Heart left ventricle (tissue), 16 donors: ENCODE measurements at regions of chr20 and their contacts with region 1.

Region 1: GRCh38 chr20:48682529-48683251 is 145.1 kb downstream of the PREX1 start:
- DNase-seq: peak; percentile 88 to 94 (median 90)
- ATAC-seq: peak; percentile 90 to 93 (median 92)
- H3K4me3 ChIP-seq: peak overlapping the region in 8 of 12 donors; percentile 1 to 28 (median 14)
- H3K27ac ChIP-seq: peak overlapping the region; percentile 50 to 79 (median 70)
- H3K4me1 ChIP-seq: peaks cover 19 to 62% (median 57%) of the 10 kb centered on the region in 12 donors
- H3K27me3 ChIP-seq: no peaks in the 10 kb centered on the region
- CTCF ChIP-seq: no peak
- POLR2A ChIP-seq: no peak

Region 2: DNA sequence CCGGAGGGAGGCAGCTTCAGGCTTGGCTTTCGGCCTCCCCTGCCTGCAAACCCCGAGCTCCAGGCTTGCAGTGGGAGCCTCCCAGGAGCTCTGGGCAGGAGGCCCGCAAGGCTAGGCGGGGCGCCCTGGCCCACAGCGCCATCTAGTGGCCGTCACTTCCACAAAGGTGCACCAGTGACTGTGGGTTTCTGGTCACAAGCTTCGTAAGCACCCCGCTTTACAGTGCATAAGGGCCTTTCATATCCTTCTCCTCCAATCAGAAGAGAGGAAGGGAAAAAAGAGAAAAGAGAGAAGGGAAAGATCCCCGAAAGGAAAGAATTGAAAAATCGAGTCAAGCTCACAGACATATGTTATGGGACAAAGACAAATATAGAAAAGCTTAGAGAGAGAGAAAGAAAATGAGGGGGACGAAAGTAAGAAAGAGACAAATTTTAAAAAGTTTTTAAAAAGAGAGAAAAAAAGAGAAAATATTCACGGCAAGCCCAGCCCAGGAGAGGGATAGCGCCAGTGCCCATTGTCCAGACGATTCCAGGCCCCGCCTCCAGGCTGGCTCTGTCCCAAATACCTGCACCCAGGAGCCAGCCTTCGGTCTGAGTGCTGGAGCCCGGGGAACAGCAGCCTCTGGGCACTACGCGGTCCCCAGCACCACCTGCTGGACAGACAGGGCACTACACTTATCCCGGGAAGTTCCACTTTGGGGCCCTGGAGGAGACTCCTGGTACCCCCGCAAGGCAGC is 62.0 kb before region 1 on chr20:
- intact Hi-C with region 1: no loop called
- DNase-seq: peak; percentile 84 to 91 (median 86)
- ATAC-seq: peak; percentile 88 to 95 (median 94)
- H3K4me3 ChIP-seq: peak overlapping the region in 9 of 12 donors; percentile 1 to 55 (median 37)
- H3K27ac ChIP-seq: no peak overlapping the region
- H3K4me1 ChIP-seq: peaks cover 0 to 27% (median 15%) of the 10 kb centered on the region in 12 donors
- H3K27me3 ChIP-seq: no peaks in the 10 kb centered on the region
- CTCF ChIP-seq: peak in 11 of 12 donors; percentile 74 to 90 (median 81)
- POLR2A ChIP-seq: no peak

Region 3: GRCh38 chr20:48750947-48751635 is 68.4 kb after region 1 on chr20:
- intact Hi-C with region 1: loop called in 1 of 10 experiments (anchors 5 kb)
- DNase-seq: peak; percentile 75 to 88 (median 78)
- ATAC-seq: peak; percentile 79 to 95 (median 89)
- H3K4me3 ChIP-seq: peak overlapping the region in 1 of 12 donors; percentile 5
- H3K27ac ChIP-seq: peak overlapping the region; percentile 40 to 85 (median 68)
- H3K4me1 ChIP-seq: peaks cover 0 to 85% (median 10%) of the 10 kb centered on the region in 12 donors
- H3K27me3 ChIP-seq: no peaks in the 10 kb centered on the region
- CTCF ChIP-seq: peak in 1 of 12 donors; percentile 6
- POLR2A ChIP-seq: no peak

Region 4: DNA sequence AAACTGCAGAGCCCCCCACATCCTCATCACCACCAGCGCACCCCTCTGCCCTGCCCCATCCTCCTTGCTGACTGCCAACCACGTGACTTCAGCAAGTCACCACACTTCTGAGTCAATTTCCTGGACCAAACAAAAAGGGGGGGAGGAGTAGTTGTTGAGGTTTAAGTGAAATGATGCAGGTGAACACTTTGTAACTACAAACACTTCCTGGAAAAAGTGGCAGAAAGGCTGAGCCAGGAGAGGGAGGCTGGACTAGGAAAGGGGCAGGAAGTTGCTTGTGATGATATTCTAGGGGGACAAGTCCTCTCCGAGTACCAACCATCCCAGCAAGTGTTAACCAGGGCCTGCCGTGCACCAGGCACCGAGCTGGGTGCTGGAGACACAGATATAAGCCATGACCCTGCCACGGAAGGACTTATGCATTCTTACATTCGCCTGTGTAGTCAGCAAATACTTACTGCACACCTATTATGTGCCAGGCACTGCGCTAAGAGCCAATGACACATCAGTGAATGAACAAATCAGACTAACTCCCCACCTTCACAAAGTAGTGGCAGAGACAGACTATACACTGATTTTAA is 77.8 kb after region 1 on chr20:
- intact Hi-C with region 1: loop called in 1 of 10 experiments (anchors 5 kb)
- DNase-seq: peak in 3 of 5 donors; percentile 32 to 66 (median 41)
- ATAC-seq: peak; percentile 23 to 68 (median 57)
- H3K4me3 ChIP-seq: peak overlapping the region in 1 of 12 donors; percentile 23
- H3K27ac ChIP-seq: peak overlapping the region; percentile 26 to 87 (median 62)
- H3K4me1 ChIP-seq: peaks cover 0 to 92% (median 23%) of the 10 kb centered on the region in 12 donors
- H3K27me3 ChIP-seq: no peaks in the 10 kb centered on the region
- CTCF ChIP-seq: no peak
- POLR2A ChIP-seq: no peak

Region 5: DNA sequence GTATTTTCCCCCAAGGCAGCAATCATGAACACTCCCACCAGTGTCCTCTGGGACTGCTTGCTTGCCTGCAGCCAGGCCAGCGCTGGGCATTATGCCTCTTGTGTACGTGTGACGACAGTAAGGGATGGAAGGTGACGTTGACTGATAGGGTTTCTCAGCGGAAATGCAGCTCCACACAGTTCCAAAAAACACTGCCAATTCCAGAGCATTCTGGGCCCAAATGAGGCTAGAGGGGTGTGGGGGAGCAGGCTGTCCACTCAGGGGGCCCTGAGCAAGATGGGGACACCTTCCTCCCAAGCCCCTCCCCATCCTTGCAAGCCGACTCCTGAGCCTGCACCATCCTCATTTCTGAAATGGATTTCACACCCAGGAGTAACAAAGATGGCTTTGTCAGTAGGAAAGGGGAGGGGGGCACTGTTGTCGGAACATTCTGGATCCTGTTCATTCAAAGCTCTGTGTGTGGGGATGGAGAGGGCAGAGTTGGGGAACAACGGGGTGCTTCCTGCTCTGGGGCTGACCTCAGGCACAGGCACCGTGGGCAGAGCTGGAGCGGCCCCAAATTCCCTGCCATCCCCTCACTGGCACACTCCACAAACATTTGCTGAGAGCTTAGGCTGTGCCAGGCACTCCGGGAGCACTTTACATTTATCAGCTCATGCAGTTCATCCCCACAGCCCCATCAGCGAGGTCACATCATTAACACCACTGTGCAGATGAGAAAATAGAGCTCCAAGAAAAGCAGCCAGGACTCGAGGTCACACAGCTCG is 125.2 kb after region 1 on chr20:
- intact Hi-C with region 1: loop called in 1 of 10 experiments (anchors 5 kb)
- DNase-seq: peak in 3 of 5 donors; percentile 53 to 82 (median 79)
- ATAC-seq: peak; percentile 79 to 90 (median 87)
- H3K4me3 ChIP-seq: peak overlapping the region in 3 of 12 donors; percentile 8 to 21 (median 10)
- H3K27ac ChIP-seq: peak overlapping the region in 8 of 12 donors; percentile 17 to 67 (median 50)
- H3K4me1 ChIP-seq: peaks cover 0 to 68% (median 12%) of the 10 kb centered on the region in 12 donors
- H3K27me3 ChIP-seq: no peaks in the 10 kb centered on the region
- CTCF ChIP-seq: no peak
- POLR2A ChIP-seq: no peak

Region 6: DNA sequence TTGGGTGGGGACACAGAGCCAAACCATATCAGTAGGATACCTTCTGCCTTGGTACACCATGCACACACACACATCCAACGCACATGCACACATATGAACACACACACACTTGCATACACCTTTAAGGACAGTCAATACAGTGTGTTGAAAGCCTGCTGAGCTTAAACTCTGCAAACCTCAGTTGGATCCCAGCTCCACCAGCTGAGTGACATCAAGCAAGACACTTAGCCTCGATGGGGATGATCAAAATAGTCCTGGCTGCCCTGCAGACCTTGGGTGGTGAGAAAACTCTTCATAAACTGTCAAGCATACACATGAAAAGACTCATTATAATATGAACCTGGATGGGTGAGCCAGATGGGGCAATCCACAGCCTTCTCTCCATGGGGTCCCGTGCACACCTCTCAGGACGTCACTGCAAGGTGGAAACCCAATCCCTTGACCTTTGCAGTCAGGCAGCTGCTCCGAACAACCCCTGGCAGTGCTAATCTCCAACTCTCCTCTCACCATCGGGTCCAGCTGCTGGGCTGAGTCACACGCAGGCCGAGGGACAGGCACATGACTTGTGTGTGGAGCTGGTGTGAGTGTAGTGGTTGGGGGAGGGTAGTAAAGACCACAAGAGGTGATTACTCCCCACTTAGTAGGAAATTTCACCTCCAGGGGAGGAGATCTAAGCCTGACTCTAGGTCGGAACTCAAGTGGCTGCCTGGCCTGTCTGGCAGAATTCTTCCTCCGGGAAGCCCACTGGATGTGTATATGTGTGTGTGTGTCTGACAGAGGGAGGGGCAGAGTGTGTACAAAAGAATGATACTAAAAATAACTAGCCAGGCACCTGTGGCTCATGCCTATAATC is 171.1 kb after region 1 on chr20:
- intact Hi-C with region 1: no loop called
- DNase-seq: peak in 3 of 5 donors; percentile 51 to 70 (median 68)
- ATAC-seq: peak; percentile 35 to 88 (median 80)
- H3K4me3 ChIP-seq: no peak overlapping the region
- H3K27ac ChIP-seq: peak overlapping the region in 1 of 12 donors; percentile 4
- H3K4me1 ChIP-seq: peaks cover 0 to 41% (median 0%) of the 10 kb centered on the region in 12 donors
- H3K27me3 ChIP-seq: no peaks in the 10 kb centered on the region
- CTCF ChIP-seq: no peak
- POLR2A ChIP-seq: no peak